Heart right ventricle (tissue), 16 donors: ENCODE measurements at regions of chr11 and their contacts with region 1.

Region 1: DNA sequence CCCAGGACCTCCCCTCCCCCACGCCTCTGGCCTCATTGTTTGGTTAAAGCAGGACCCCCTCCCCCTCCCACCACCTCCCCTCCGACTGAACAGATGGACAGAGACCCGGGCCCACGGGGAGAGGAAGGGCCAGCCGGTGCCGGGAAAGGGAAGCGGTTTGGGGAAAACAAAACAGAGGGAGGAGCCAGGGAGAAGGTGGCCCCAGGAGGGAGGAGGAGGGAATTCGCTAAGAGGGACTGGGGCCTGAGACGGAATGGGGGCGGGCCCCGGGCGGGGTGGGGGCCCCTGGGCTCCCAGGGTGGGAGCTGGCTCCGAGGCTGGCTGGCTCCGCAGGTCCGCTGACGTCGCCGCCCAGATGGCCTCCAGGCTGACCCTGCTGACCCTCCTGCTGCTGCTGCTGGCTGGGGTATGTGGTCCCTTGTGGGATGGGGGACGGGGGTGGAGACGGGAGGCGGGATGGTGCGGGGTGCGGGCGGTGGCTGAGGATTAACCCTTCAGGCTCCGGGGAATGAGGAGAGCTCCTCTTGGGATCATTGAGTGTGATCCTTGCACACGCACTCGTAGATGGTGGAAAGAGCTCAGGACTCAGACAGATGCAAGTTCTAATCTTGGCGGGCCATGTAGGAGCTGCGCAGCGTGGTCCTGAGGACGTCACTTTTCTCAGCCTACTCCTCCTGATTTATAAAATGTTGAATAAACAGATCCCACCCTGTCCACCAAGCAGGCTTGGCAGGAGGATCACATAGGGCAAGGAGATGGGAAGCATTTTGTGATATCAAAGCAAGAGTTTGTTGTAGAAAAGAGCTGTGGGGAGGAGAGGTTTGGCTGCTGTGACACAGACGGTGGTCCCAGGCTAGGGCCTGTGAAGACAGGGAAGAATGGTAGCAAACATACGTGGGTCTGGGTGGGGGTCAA is 688 bp downstream of the SERPING1 start:
- DNase-seq: peak; percentile 87 to 88
- ATAC-seq: peak; percentile 94 to 97 (median 95)
- H3K4me3 ChIP-seq: peak overlapping the region; percentile 6 to 65 (median 58)
- H3K27ac ChIP-seq: peak overlapping the region; percentile 57 to 95 (median 89)
- H3K4me1 ChIP-seq: peaks cover 0 to 35% (median 10%) of the 10 kb centered on the region in 9 donors
- H3K27me3 ChIP-seq: peaks cover 0 to 11% (median 0%) of the 10 kb centered on the region in 7 donors
- CTCF ChIP-seq: no peak

Region 2: GRCh38 chr11:57552479-57552878 is 45.7 kb before region 1 on chr11:
- intact Hi-C with region 1: no loop called
- DNase-seq: no peak
- ATAC-seq: no peak
- H3K4me3 ChIP-seq: no peak overlapping the region
- H3K27ac ChIP-seq: no peak overlapping the region
- H3K4me1 ChIP-seq: peaks cover 0 to 7% (median 0%) of the 10 kb centered on the region in 9 donors
- H3K27me3 ChIP-seq: no peaks in the 10 kb centered on the region
- CTCF ChIP-seq: no peak

Region 3: DNA sequence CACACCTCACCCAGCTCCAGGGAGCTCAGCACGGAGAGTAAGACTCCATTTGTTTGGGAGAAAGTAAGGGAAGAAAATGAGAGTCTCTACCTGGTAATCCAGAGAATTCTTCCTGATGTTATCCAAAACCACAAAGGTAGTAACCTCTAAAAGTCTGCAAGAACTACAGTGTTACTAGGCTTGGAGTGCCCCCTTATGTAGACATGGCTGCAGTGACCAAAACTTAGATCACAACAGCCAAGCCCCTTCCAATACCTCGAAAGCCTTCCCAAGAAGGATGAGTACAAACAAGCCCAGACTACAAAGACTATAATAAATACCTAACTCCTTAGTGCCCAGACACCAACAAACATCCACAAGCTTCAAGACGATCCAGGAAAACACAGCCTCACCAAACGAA is 35.6 kb before region 1 on chr11:
- intact Hi-C with region 1: loop called in 1 of 10 experiments (anchors 5 kb)
- DNase-seq: no peak
- ATAC-seq: no peak
- H3K4me3 ChIP-seq: no peak overlapping the region
- H3K27ac ChIP-seq: no peak overlapping the region
- H3K4me1 ChIP-seq: peaks cover 0 to 45% (median 17%) of the 10 kb centered on the region in 9 donors
- H3K27me3 ChIP-seq: no peaks in the 10 kb centered on the region
- CTCF ChIP-seq: no peak

Region 4: GRCh38 chr11:57567515-57568329 is 30.5 kb before region 1 on chr11 and contains the start of gene UBE2L6:
- intact Hi-C with region 1: loop called in 3 of 10 experiments (anchors 2 to 5 kb)
- DNase-seq: peak; percentile 50 to 67
- ATAC-seq: peak; percentile 75 to 91 (median 85)
- H3K4me3 ChIP-seq: peak within 1 kb of the TSS; percentile 23 to 90 (median 80)
- H3K27ac ChIP-seq: peak within 1 kb of the TSS; percentile 51 to 94 (median 84)
- H3K4me1 ChIP-seq: peaks cover 0 to 52% (median 12%) of the 10 kb centered on the region in 9 donors
- H3K27me3 ChIP-seq: no peaks in the 10 kb centered on the region
- CTCF ChIP-seq: peak in 4 of 9 donors; percentile 78 to 89 (median 86)
- total RNA-seq, gene UBE2L6: 9.7 to 156 (median 17.7) TPM

Region 5: DNA sequence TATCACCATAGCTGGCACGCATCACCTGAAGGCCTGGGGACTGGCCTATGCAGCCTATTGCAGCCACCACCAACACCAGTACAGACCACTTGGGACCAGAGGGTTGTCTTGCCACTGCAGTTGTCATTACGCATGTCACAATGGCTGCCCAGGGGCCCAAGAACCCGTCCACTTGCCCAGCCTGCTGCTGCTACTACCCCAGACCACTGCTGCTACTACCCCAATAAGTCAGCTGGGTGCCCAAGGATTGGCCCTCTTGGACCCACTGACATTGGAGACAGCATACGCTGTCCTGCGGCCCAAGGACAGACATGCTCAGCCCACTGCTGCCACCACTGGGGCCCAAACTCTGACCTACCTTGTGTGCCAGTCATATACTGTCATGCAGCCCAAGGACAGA is 322.8 kb after region 1 on chr11:
- intact Hi-C with region 1: no loop called
- DNase-seq: no peak
- ATAC-seq: no peak
- H3K4me3 ChIP-seq: no peak overlapping the region
- H3K27ac ChIP-seq: no peak overlapping the region
- H3K4me1 ChIP-seq: no peaks in the 10 kb centered on the region
- H3K27me3 ChIP-seq: no peaks in the 10 kb centered on the region
- CTCF ChIP-seq: no peak